WTC11 (cell line): ENCODE measurements at regions of chr7 and their contacts with region 1.

Region 1: GRCh38 chr7:87152107-87152844 is at the start of gene DMTF1:
- DNase-seq: peak; percentile 92
- ATAC-seq: peak; percentile 89
- H3K4me3 Mint-ChIP-seq: peak within 1 kb of the TSS; percentile 94
- H3K27ac Mint-ChIP-seq: peak within 1 kb of the TSS; percentile 99
- H3K4me1 Mint-ChIP-seq: peaks cover 49% of the 10 kb centered on the region
- H3K27me3 Mint-ChIP-seq: no peaks in the 10 kb centered on the region
- CTCF ChIP-seq: no peak
- total RNA-seq, gene DMTF1: 79.3 to 87.9 TPM (median 86.8 TPM) in 3 replicates

Region 2: GRCh38 chr7:86914551-86914950 is 237.7 kb before region 1 on chr7:
- CTCF ChIA-PET with region 1: interaction called, 18 read pairs
- POLR2A ChIA-PET with region 1: interaction called, 3 read pairs
- DNase-seq: no peak
- ATAC-seq: no peak
- H3K4me3 Mint-ChIP-seq: no peak overlapping the region
- H3K27ac Mint-ChIP-seq: no peak overlapping the region
- H3K4me1 Mint-ChIP-seq: peaks cover 12% of the 10 kb centered on the region
- H3K27me3 Mint-ChIP-seq: peaks cover 21% of the 10 kb centered on the region
- CTCF ChIP-seq: peak; percentile 58

Region 3: DNA sequence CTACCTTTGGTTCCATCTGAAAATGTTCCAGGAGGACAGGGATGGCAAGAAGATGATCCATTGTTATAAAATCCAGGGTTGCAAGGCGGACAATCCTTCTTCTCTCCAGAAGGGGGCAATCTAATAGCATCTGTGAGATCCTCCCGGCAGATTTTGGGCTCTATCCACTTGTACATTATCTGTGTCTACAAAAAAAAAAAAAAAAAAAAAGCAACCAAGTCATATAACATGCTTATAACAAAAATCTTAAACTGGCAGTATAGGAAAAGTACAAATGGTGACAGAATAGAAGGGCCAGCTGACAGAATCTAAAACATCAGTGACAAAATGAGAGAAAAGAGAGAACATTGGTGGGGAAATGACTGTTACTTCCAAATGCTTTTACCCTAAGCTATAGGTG is 225.5 kb before region 1 on chr7:
- CTCF ChIA-PET with region 1: interaction called, 34 read pairs
- POLR2A ChIA-PET with region 1: interaction called, 3 read pairs
- DNase-seq: peak; percentile 20
- ATAC-seq: peak; percentile 82
- H3K4me3 Mint-ChIP-seq: no peak overlapping the region
- H3K27ac Mint-ChIP-seq: no peak overlapping the region
- H3K4me1 Mint-ChIP-seq: no peaks in the 10 kb centered on the region
- H3K27me3 Mint-ChIP-seq: no peaks in the 10 kb centered on the region
- CTCF ChIP-seq: peak; percentile 62

Region 4: DNA sequence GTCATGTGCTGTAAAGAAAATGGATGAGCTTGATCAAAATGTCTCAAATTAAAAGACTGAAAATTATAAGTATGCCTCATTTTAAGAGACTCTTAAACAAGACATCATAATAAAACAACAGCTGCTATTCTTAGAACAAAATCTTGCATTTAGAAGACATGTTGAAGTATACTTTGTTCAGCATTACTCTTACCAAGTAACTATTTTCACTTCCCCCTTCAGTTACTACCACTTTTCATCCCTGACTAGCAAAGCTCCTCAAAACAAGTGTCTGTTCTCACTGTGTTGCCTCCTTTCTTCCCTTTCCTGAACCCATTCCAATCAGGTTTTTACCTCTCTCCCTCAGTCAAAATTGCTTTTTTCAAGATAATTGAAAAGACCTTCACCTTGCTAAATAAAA is 124.4 kb before region 1 on chr7:
- CTCF ChIA-PET with region 1: no interaction called
- POLR2A ChIA-PET with region 1: no interaction called
- DNase-seq: no peak
- ATAC-seq: no peak
- H3K4me3 Mint-ChIP-seq: no peak overlapping the region
- H3K27ac Mint-ChIP-seq: no peak overlapping the region
- H3K4me1 Mint-ChIP-seq: no peaks in the 10 kb centered on the region
- H3K27me3 Mint-ChIP-seq: no peaks in the 10 kb centered on the region
- CTCF ChIP-seq: no peak

Region 5: GRCh38 chr7:87059525-87060287 is 92.6 kb before region 1 on chr7 and contains the start of gene ELAPOR2:
- CTCF ChIA-PET with region 1: interaction called, 18 read pairs
- POLR2A ChIA-PET with region 1: interaction called, 16 read pairs
- DNase-seq: peak; percentile 88
- ATAC-seq: peak; percentile 97
- H3K4me3 Mint-ChIP-seq: peak within 1 kb of the TSS; percentile 85
- H3K27ac Mint-ChIP-seq: peak within 1 kb of the TSS; percentile 68
- H3K4me1 Mint-ChIP-seq: peaks cover 13% of the 10 kb centered on the region
- H3K27me3 Mint-ChIP-seq: peaks cover 23% of the 10 kb centered on the region
- CTCF ChIP-seq: peak; percentile 44
- total RNA-seq, gene ELAPOR2: 38.7 to 42.7 TPM (median 41.6 TPM) in 3 replicates

Region 6: GRCh38 chr7:87219545-87220025 is 67.3 kb after region 1 on chr7 and contains the start of gene TMEM243:
- CTCF ChIA-PET with region 1: interaction called, 7 read pairs
- POLR2A ChIA-PET with region 1: interaction called, 24 read pairs
- DNase-seq: peak; percentile 46
- ATAC-seq: peak; percentile 28
- H3K4me3 Mint-ChIP-seq: peak within 1 kb of the TSS; percentile 93
- H3K27ac Mint-ChIP-seq: peak within 1 kb of the TSS; percentile 72
- H3K4me1 Mint-ChIP-seq: peaks cover 21% of the 10 kb centered on the region
- H3K27me3 Mint-ChIP-seq: no peaks in the 10 kb centered on the region
- CTCF ChIP-seq: no peak
- total RNA-seq, gene TMEM243: 24.2 to 29.0 TPM (median 25.9 TPM) in 3 replicates